IMR-90 (cell line): ENCODE measurements at regions of chr16 and their contacts with region 1.

Region 1: GRCh38 chr16:6891496-6891895 is 441.1 kb upstream of the RBFOX1 start:
- DNase-seq: no peak
- ATAC-seq: no peak
- H3K4me3 ChIP-seq: no peak overlapping the region
- H3K27ac ChIP-seq: no peak overlapping the region
- H3K4me1 ChIP-seq: no peaks in the 10 kb centered on the region
- H3K27me3 ChIP-seq: no peaks in the 10 kb centered on the region
- CTCF ChIP-seq: no peak
- POLR2A ChIP-seq: no peak
- RAD21 ChIP-seq: no peak

Region 2: DNA sequence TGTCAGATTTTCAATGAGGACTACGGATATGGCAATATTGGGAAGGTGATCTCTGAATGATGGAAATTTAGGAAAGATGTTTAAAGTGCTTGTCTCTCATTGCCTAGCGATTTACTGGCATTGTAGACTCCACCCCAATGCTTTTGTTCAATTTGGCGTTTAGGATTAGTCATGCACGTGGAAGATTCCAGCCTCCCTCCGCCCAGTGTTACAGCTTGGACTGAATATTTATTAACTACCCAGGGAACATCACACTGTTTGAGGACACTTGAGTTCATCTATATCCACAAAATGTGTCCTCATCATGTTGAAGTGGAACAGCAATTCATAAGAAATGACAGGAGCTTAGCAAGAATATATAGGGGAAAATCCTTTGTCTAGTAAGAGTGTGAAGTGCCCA is 297.7 kb before region 1 on chr16:
- CTCF ChIA-PET with region 1: no interaction called
- POLR2A ChIA-PET with region 1: no interaction called
- dilution Hi-C with region 1: no loop called
- in situ Hi-C with region 1: no loop called
- intact Hi-C with region 1: no loop called
- DNase-seq: no peak
- ATAC-seq: no peak
- H3K4me3 ChIP-seq: no peak overlapping the region
- H3K27ac ChIP-seq: no peak overlapping the region
- H3K4me1 ChIP-seq: no peaks in the 10 kb centered on the region
- H3K27me3 ChIP-seq: no peaks in the 10 kb centered on the region
- CTCF ChIP-seq: no peak
- POLR2A ChIP-seq: no peak
- RAD21 ChIP-seq: no peak

Region 3: GRCh38 chr16:6633456-6633855 is 258.0 kb before region 1 on chr16:
- CTCF ChIA-PET with region 1: no interaction called
- POLR2A ChIA-PET with region 1: no interaction called
- dilution Hi-C with region 1: no loop called
- in situ Hi-C with region 1: no loop called
- intact Hi-C with region 1: no loop called
- DNase-seq: no peak
- ATAC-seq: no peak
- H3K4me3 ChIP-seq: no peak overlapping the region
- H3K27ac ChIP-seq: no peak overlapping the region
- H3K4me1 ChIP-seq: no peaks in the 10 kb centered on the region
- H3K27me3 ChIP-seq: no peaks in the 10 kb centered on the region
- CTCF ChIP-seq: no peak
- POLR2A ChIP-seq: no peak
- RAD21 ChIP-seq: no peak

Region 4: DNA sequence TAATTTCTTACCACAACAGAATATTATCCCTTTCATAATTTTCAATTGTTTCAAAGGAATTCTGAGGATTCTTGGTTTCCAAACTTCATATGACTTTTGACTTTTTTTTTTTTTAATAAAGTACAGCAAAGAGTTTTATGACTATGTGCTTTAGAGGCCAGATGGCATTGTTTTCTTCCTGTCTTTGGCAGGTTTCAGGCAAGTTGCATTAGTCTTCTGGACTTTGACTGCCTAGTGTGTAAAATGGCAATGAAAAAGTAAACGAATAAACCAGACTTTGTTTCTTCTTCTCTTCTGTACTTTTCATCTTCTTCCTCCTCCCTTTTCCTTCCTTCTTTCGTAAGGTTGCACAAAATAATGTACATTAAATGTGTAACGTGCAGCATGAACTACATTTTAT is 268.6 kb after region 1 on chr16:
- CTCF ChIA-PET with region 1: interaction called, 13 read pairs
- POLR2A ChIA-PET with region 1: no interaction called
- dilution Hi-C with region 1: no loop called
- in situ Hi-C with region 1: no loop called
- intact Hi-C with region 1: no loop called
- DNase-seq: no peak
- ATAC-seq: no peak
- H3K4me3 ChIP-seq: no peak overlapping the region
- H3K27ac ChIP-seq: no peak overlapping the region
- H3K4me1 ChIP-seq: no peaks in the 10 kb centered on the region
- H3K27me3 ChIP-seq: no peaks in the 10 kb centered on the region
- CTCF ChIP-seq: no peak
- POLR2A ChIP-seq: no peak
- RAD21 ChIP-seq: no peak